ENCODE measurements at regions of chr12 and their contacts with region 1.

Region 1: DNA sequence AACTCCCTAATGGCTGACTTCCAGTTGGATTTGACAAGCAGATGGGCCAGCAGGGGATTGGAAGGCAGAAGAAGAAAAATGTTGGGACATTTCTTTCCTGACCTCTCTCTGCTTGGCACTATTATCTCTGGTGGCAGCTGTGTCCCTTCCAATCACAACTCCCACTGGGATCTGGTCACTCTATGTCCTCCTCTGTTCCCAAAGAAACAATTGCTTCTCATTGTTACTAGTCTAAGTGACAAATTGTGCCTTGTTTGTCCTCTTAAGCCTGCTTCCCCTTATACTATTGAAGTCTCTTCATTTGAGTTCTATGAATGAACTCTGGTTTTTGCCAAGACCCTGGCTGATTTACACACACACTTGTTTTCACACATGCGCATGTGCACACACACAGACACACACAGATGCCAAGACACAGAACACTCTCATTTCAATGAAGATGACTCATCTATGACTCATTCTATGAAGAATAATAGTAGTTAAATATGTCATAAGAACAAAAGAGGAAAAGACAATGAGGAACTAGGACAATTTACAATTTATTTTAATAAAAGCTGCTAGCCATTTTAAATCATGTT is 83.0 kb upstream of the FAR2 start:
- DNase-seq: no peak
- H3K4me3 ChIP-seq: no peak overlapping the region
- CTCF ChIP-seq: no peak
- POLR2A ChIP-seq: no peak

Region 2: DNA sequence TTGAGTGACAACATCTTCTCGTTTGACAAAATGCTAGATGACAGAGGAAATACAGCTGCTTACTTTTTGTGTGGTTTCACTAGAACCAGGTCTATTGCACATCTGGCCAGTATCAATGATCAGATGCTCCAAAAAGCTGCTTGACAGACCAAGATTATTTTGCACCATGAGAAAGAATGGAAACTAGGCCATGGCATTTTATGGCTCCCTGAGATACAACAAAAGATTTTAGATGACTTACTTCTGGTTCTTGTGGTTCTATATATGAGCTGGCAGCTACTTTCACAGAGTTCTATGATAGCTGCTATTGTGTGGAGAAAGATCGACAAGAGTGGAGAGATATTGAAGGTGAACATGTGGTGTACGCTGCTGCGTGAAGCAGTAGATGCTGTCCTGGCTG is 1568.0 kb before region 1 on chr12:
- intact Hi-C with region 1: no loop called
- DNase-seq: no peak
- H3K4me3 ChIP-seq: no peak overlapping the region
- CTCF ChIP-seq: no peak
- POLR2A ChIP-seq: no peak

Region 3: GRCh38 chr12:30839643-30840220 is 1773.6 kb after region 1 on chr12:
- intact Hi-C with region 1: loop called (anchors 10 kb)
- DNase-seq: no peak
- H3K4me3 ChIP-seq: no peak overlapping the region
- CTCF ChIP-seq: no peak
- POLR2A ChIP-seq: no peak

Measured in lower leg skin (tissue), 4 donors.